Activated T-helper 2 cell treated with anti-CD3 and anti-CD28 coated beads, Interferon-gamma antibody, Interleukin-2, Interleukin-4, amounts not matched to agents 10 μg/mL and 5 μg/mL and 100 μg/mL, durations not matched to agents 14 hours and 24 hours and 36 hours (primary cell): ENCODE measurements at regions of chr14 and their contacts with region 1.

Region 1: GRCh38 chr14:55160989-55161388 is 30.4 kb downstream of the DLGAP5 start:
- DNase-seq: no peak
- H3K4me3 Mint-ChIP-seq: no peak overlapping the region
- H3K27ac Mint-ChIP-seq: no peak overlapping the region
- H3K4me1 Mint-ChIP-seq: peaks cover 24% of the 10 kb centered on the region
- H3K27me3 Mint-ChIP-seq: no peaks in the 10 kb centered on the region

Region 2: DNA sequence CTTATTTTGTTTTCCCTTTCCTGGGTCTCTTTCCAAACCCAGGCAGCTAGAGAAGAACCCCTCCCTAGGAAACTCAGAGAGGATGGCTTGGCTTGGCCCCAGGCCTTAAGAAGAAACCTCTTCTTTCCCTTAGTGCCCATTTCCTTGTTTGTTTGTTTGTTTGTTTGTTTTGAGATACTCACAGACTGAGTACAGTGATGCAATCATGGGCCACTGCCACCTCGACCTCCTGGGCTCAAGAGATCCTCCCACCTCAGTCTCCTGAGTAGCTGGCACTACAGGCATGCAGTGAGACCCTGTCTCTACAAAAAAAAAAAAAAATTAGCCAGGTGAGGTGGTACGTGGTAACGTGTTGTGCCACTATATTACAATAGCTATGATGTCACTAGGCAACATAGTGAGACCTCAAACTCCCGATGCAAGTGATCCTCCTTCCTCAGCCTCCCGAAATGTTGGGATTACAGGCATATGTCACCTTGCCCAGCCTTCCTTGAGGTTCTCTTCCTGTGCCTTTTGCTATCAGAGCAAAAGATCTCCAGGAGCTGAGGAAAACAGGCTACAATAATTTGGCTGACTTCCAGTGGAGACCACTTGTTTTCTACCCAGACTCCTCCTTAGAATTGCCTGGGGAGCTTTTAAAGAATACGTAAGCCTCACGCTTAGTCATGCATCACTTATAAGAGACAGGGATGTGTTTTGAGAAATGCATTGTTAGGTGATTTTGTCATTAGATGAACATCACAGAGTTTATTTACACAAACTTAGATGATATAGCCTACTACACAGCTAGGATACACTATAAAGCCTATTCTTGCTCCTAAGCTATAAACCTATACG is 66.5 kb before region 1 on chr14:
- intact Hi-C with region 1: loop called (anchors 1 kb)
- DNase-seq: no peak
- H3K4me3 Mint-ChIP-seq: no peak overlapping the region
- H3K27ac Mint-ChIP-seq: no peak overlapping the region
- H3K4me1 Mint-ChIP-seq: peaks cover 20% of the 10 kb centered on the region
- H3K27me3 Mint-ChIP-seq: no peaks in the 10 kb centered on the region

Region 3: GRCh38 chr14:55117803-55118441 is 43.1 kb before region 1 on chr14:
- intact Hi-C with region 1: no loop called
- DNase-seq: no peak
- H3K4me3 Mint-ChIP-seq: no peak overlapping the region
- H3K27ac Mint-ChIP-seq: no peak overlapping the region
- H3K4me1 Mint-ChIP-seq: no peaks in the 10 kb centered on the region
- H3K27me3 Mint-ChIP-seq: peaks cover 19% of the 10 kb centered on the region